IMR-90 (cell line): ENCODE measurements at regions of chr3 and their contacts with region 1.

Region 1: DNA sequence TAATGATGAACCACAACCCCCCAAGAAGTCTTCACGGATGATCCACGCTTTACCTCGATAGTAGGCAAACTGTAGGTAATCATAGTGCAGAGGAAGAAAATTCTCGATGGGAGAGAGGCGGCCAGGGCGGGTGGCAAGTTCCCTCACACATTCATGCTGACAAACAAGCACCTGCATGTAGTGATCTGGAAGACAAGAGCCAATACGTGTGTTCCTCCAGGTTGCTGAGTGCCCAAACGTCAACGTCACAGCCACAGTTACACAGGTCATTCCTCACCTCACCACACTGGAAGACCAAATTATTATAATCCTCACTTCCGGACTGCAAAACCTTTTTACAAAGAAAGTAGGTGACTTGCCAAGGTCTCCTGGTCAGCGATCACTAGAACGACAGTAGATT is 131.8 kb downstream of the P3H2 start:
- DNase-seq: no peak
- ATAC-seq: no peak
- H3K4me3 ChIP-seq: no peak overlapping the region
- H3K27ac ChIP-seq: no peak overlapping the region
- H3K4me1 ChIP-seq: no peaks in the 10 kb centered on the region
- H3K27me3 ChIP-seq: no peaks in the 10 kb centered on the region
- CTCF ChIP-seq: no peak
- POLR2A ChIP-seq: no peak
- RAD21 ChIP-seq: no peak

Region 2: GRCh38 chr3:190003681-190004123 is 14.8 kb after region 1 on chr3:
- CTCF ChIA-PET with region 1: no interaction called
- POLR2A ChIA-PET with region 1: no interaction called
- dilution Hi-C with region 1: no loop called
- in situ Hi-C with region 1: no loop called
- intact Hi-C with region 1: loop called (anchors 2 kb)
- DNase-seq: peak; percentile 75
- ATAC-seq: peak; percentile 79
- H3K4me3 ChIP-seq: no peak overlapping the region
- H3K27ac ChIP-seq: peak overlapping the region; percentile 46
- H3K4me1 ChIP-seq: peaks cover 13% of the 10 kb centered on the region
- H3K27me3 ChIP-seq: no peaks in the 10 kb centered on the region
- CTCF ChIP-seq: no peak
- POLR2A ChIP-seq: no peak
- RAD21 ChIP-seq: no peak